Activated CD8-positive, alpha-beta T cell treated with anti-CD3 and anti-CD28 coated beads, Interleukin-2, amount 10 ng/mL, durations not matched to agents 7 days and 5 days (primary cell): ENCODE measurements at regions of chr7 and their contacts with region 1.

Region 1: DNA sequence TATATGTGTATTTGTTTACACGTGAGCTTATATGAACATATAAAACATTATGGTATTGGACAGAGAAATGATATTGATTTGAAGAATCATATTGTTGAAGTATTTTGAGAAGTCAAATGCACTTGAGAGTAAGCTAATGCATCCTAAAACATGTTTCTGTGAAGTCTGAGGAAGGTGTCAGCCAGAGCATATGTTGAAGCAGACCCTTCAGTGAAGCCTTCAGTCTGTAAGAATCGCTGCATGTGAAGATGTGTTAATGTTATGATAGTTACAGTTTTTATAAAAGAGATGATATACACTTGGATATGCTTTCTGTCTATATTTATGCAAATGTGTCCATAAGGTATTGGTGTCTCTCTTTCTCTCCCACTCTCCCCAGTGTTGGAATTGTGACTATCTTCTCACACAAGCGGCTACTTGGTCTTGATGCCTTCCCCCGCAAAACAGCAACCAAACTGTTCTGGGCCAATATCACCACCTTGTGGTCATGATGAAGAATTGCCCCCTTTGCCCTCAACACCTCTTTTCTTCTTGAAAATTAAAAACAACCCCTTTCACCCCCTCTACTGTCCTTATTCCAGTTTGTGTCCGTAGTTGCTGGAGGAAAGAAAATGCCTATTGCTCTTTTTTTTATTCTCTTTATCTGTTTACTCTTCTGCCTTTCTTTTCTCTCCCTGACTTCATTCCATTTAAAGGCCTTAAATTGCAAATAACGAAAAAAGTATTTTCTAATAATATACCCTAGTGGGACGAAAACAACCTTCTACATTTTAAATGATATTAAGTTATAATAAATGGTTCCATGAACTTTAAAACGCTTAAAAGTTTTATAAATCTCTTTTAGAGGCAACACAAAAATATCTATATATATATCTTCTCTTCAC is 64.9 kb downstream of the IKZF1 start:
- DNase-seq: peak; percentile 76
- ATAC-seq: peak; percentile 45
- H3K4me3 Mint-ChIP-seq: peak overlapping the region; percentile 6
- H3K27ac Mint-ChIP-seq: peak overlapping the region; percentile 76
- H3K4me1 Mint-ChIP-seq: peaks cover 96% of the 10 kb centered on the region
- H3K27me3 Mint-ChIP-seq: no peaks in the 10 kb centered on the region

Region 2: DNA sequence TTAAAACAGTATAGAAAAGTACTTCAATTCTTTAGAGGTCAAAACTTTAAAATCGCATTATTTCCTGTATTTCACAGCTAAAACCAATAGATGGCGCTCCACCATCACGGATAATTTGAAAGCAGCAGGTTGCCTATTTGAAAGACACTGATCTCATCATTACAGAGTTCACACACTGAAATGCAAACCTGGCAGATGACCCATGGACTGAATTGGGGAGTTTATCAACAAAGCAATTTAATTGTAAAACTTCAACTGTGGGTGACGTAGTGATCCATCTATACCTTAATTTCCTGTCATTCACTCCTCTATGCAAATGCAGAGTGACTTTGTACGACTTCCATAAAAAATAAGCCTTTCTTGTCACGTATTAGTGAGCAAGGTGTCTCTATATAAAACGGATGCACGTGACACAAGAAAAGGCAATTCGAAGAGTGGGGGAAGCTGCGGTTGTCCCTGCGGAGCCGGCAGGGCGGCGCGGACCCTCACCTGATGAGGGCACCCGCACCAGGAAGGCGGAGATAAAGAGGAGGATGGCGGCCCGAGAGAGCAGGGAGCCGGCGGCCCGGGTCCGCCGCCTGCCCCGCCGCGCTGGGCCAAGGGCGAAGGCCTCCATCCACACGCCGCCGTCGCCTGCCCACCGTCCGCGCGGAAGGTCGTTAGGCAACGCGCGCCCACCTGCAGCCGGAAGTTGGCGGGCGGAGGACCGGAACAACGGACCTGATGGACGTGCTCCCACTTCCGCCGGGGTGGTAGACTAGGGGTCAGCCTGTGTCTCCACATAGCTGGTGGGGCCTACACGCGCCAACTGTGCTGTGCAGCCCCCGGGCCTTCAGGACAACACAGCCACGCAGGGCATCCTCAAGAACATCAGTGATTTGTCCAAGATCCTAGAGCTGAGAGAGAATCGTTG is 276.6 kb before region 1 on chr7 and contains the start of gene ZPBP:
- CTCF ChIA-PET with region 1: interaction called, 32 read pairs
- POLR2A ChIA-PET with region 1: no interaction called
- DNase-seq: peak; percentile 71
- ATAC-seq: peak; percentile 80
- H3K4me3 Mint-ChIP-seq: peak within 1 kb of the TSS; percentile 80
- H3K27ac Mint-ChIP-seq: peak within 1 kb of the TSS; percentile 88
- H3K4me1 Mint-ChIP-seq: peaks cover 14% of the 10 kb centered on the region
- H3K27me3 Mint-ChIP-seq: peaks cover 14% of the 10 kb centered on the region
- total RNA-seq, gene ZPBP: not detected

Region 3: DNA sequence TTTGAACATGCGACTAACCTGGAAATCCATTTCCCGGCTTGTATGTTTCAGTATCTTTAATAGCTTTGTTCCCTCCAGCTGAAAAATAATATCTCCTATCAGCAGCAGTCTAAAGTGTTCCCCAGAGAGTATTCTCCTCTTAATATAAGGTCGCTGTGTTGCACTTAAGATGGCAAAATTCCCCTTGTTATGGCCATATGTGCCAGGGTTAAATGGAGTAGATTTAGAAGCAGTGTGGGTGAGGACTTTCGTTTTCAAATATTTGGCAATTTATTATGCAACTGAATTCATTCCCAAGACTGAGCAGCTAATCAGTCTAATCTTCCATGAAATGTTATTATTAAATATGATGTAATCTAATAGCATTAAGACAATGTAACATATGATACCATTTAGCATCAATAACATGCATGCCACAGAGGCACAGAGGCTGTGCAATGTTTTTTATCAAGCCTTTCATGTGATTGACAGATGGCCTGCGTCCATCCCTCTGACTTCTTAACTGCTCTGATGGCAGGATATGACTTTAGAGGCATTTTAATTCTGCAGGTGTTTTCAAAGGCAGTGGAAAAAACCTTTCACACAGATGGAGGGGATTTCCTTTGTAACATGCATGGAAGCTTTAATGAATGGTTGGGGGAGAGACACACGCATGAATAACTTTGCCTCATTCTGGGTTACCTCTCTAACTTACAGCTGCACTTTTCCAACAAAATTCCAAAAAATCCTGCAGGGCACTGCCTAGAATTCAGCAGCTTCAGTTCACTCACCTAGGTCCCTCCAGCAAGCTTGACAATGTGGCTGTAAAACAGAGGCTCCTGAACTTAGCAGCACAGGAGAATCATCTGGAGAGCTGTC is 221.2 kb before region 1 on chr7:
- CTCF ChIA-PET with region 1: interaction called, 52 read pairs
- POLR2A ChIA-PET with region 1: interaction called, 7 read pairs
- DNase-seq: peak; percentile 52
- ATAC-seq: peak; percentile 57
- H3K4me3 Mint-ChIP-seq: no peak overlapping the region
- H3K27ac Mint-ChIP-seq: peak overlapping the region; percentile 75
- H3K4me1 Mint-ChIP-seq: peaks cover 76% of the 10 kb centered on the region
- H3K27me3 Mint-ChIP-seq: no peaks in the 10 kb centered on the region

Region 4: GRCh38 chr7:50229964-50230363 is 139.4 kb before region 1 on chr7:
- CTCF ChIA-PET with region 1: interaction called, 11 read pairs
- POLR2A ChIA-PET with region 1: no interaction called
- DNase-seq: no peak
- ATAC-seq: no peak
- H3K4me3 Mint-ChIP-seq: no peak overlapping the region
- H3K27ac Mint-ChIP-seq: no peak overlapping the region
- H3K4me1 Mint-ChIP-seq: peaks cover 51% of the 10 kb centered on the region
- H3K27me3 Mint-ChIP-seq: no peaks in the 10 kb centered on the region

Region 5: DNA sequence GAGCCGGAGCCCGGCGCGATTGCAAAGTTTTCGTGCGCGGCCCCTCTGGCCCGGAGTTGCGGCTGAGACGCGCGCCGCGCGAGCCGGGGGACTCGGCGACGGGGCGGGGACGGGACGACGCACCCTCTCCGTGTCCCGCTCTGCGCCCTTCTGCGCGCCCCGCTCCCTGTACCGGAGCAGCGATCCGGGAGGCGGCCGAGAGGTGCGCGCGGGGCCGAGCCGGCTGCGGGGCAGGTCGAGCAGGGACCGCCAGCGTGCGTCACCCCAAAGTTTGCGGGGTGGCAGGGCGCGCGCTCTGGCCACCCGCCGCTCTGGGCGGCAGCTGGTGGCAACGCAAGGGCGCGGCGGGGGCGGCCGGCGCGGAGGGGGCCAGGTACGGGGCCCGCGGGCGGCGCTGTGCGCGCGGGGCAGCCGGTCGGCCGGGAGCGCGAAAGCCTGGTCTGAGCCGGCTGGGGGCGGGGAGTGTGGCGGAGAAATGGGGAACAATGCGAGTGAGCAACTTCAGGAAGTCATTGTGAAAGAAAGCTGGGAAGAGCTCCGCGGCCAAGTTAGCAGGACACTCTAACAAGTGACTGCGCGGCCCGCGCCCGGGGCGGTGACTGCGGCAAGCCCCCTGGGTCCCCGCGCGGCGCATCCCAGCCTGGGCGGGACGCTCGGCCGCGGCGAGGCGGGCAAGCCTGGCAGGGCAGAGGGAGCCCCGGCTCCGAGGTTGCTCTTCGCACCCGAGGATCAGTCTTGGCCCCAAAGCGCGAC is 65.1 kb before region 1 on chr7 and contains the start of gene IKZF1:
- CTCF ChIA-PET with region 1: interaction called, 166 read pairs
- POLR2A ChIA-PET with region 1: interaction called, 38 read pairs
- DNase-seq: peak; percentile 69
- ATAC-seq: peak; percentile 43
- H3K4me3 Mint-ChIP-seq: peak within 1 kb of the TSS; percentile 92
- H3K27ac Mint-ChIP-seq: peak within 1 kb of the TSS; percentile 98
- H3K4me1 Mint-ChIP-seq: peaks cover 35% of the 10 kb centered on the region
- H3K27me3 Mint-ChIP-seq: no peaks in the 10 kb centered on the region
- total RNA-seq, gene IKZF1: 370 to 374 TPM

Region 6: GRCh38 chr7:50335795-50336754 is 33.3 kb before region 1 on chr7:
- CTCF ChIA-PET with region 1: interaction called, 322 read pairs
- POLR2A ChIA-PET with region 1: interaction called, 22 read pairs
- DNase-seq: peak; percentile 86
- ATAC-seq: peak; percentile 16
- H3K4me3 Mint-ChIP-seq: no peak overlapping the region
- H3K27ac Mint-ChIP-seq: no peak overlapping the region
- H3K4me1 Mint-ChIP-seq: no peaks in the 10 kb centered on the region
- H3K27me3 Mint-ChIP-seq: no peaks in the 10 kb centered on the region

Region 7: GRCh38 chr7:50418086-50418515 is 48.7 kb after region 1 on chr7:
- CTCF ChIA-PET with region 1: interaction called, 33 read pairs
- POLR2A ChIA-PET with region 1: no interaction called
- DNase-seq: peak; percentile 86
- ATAC-seq: peak; percentile 90
- H3K4me3 Mint-ChIP-seq: no peak overlapping the region
- H3K27ac Mint-ChIP-seq: no peak overlapping the region
- H3K4me1 Mint-ChIP-seq: peaks cover 27% of the 10 kb centered on the region
- H3K27me3 Mint-ChIP-seq: no peaks in the 10 kb centered on the region